ENCODE measurements at regions of chr3 and their contacts with region 1.

Region 1: GRCh38 chr3:177959188-177959587 is 577.0 kb upstream of the KCNMB2 start:
- DNase-seq: no peak
- H3K4me3 ChIP-seq: no peak overlapping the region
- H3K27me3 ChIP-seq: no peaks in the 10 kb centered on the region
- CTCF ChIP-seq: no peak

Region 2: GRCh38 chr3:177713928-177714900 is 245.0 kb before region 1 on chr3:
- CTCF ChIA-PET with region 1: no interaction called
- POLR2A ChIA-PET with region 1: no interaction called
- DNase-seq: no peak
- H3K4me3 ChIP-seq: no peak overlapping the region
- H3K27me3 ChIP-seq: no peaks in the 10 kb centered on the region
- CTCF ChIP-seq: no peak

Region 3: GRCh38 chr3:177890359-177890683 is 68.9 kb before region 1 on chr3:
- CTCF ChIA-PET with region 1: no interaction called
- POLR2A ChIA-PET with region 1: interaction called, 12 read pairs
- DNase-seq: no peak
- H3K4me3 ChIP-seq: no peak overlapping the region
- H3K27me3 ChIP-seq: no peaks in the 10 kb centered on the region
- CTCF ChIP-seq: no peak

Measured in BJ (cell line).